Heart left ventricle (tissue), 16 donors: ENCODE measurements at regions of chr10 and their contacts with region 1.

Region 1: DNA sequence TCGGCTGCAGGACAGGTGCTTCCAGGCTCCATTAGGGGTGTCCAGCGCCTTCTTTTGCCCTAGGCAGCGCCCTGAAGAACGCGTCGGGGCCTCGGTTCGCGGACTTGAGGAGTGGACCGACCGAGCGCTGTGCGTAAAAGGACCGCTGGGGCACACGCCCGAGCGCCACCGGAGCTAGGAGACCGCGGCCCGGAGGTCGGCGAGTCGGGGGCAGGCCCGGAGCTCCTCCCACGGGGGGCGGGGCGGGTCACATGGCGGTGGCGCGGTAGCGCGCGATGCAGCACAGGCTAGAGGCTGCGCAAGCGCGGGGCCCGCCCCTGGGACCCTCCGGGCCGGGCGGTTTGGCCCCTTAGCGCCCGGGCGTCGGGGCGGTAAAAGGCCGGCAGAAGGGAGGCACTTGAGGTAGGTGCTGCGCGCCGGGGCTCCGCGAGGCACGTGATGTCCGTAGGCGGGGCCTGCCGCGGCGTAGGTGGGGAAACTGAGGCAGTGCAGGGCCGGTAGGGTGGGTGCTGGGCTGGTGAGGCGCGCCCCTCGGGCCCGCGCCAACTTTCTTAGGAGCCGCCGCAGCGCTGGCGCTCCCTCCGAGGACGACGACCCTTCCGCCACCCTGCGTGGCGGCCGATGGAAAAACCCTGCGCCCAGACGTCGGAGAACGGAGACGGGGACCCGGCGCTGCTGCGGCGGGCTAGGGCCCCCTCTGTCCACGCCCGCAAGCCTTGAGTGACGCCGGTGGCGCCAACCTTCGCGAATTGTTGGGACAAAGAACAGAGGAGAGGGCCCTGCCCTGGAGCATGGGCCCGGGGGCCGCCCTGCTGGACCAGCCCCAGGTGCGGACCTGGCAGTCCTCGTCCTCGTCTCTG is at the start of gene PRXL2A:
- DNase-seq: peak; percentile 89 to 95 (median 91)
- ATAC-seq: peak; percentile 86 to 96 (median 94)
- H3K4me3 ChIP-seq: peak within 1 kb of the TSS; percentile 57 to 94 (median 85)
- H3K27ac ChIP-seq: peak within 1 kb of the TSS; percentile 62 to 95 (median 86)
- H3K4me1 ChIP-seq: peaks cover 3 to 60% (median 50%) of the 10 kb centered on the region in 12 donors
- H3K27me3 ChIP-seq: peaks cover 0 to 6% (median 0%) of the 10 kb centered on the region in 9 donors
- CTCF ChIP-seq: peak in 1 of 12 donors; percentile 9
- POLR2A ChIP-seq: peak in 1 of 2 donors; percentile 70
- total RNA-seq, gene PRXL2A: 63.9 to 123 (median 78.6) TPM

Region 2: DNA sequence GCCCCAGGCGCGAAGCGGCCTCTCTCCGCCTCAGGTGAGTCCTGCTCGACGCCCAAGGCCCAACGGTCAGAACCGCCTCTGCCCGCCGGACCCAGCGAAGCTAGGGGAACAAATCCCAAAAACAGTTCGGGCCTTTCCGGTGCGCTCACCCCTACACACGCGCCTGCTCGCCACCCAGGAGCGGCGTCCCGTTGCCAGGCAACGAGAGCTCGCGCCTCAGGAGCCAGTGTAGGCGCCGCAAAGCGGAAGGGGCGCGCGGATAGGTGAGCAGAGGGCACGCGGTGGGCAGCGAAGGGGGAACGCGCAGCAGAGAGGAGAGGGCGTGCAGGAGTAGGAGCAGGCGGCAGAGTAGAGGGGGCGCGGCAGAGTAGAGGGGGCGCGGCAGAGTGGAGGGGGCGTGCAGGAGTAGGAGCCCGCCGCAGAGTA is 51.9 kb before region 1 on chr10 and contains the starts of genes DYDC1 and DYDC2:
- intact Hi-C with region 1: no loop called
- DNase-seq: peak; percentile 20 to 66 (median 52)
- ATAC-seq: peak in 3 of 4 donors; percentile 62 to 83 (median 69)
- H3K4me3 ChIP-seq: peak within 1 kb of the TSS; percentile 11 to 49 (median 42)
- H3K27ac ChIP-seq: no peak within 1 kb of the TSS
- H3K4me1 ChIP-seq: peaks cover 0 to 13% (median 5%) of the 10 kb centered on the region in 12 donors
- H3K27me3 ChIP-seq: peaks cover 3 to 34% (median 14%) of the 10 kb centered on the region in 9 donors
- CTCF ChIP-seq: no peak
- POLR2A ChIP-seq: no peak
- total RNA-seq, gene DYDC1: not detected
- total RNA-seq, gene DYDC2: not detected

Region 3: GRCh38 chr10:80453701-80454513 is 45.4 kb after region 1 on chr10 and contains the start of gene TSPAN14:
- intact Hi-C with region 1: loop called in 1 of 10 experiments (anchors 5 kb)
- DNase-seq: peak; percentile 88 to 93 (median 91)
- ATAC-seq: peak; percentile 82 to 92 (median 90)
- H3K4me3 ChIP-seq: peak within 1 kb of the TSS; percentile 64 to 100 (median 95)
- H3K27ac ChIP-seq: peak within 1 kb of the TSS; percentile 93 to 100 (median 99)
- H3K4me1 ChIP-seq: peaks cover 3 to 77% (median 36%) of the 10 kb centered on the region in 12 donors
- H3K27me3 ChIP-seq: no peaks in the 10 kb centered on the region
- CTCF ChIP-seq: peak in 1 of 12 donors; percentile 7
- POLR2A ChIP-seq: peak in 1 of 2 donors; percentile 67
- total RNA-seq, gene TSPAN14: 24.6 to 71.5 (median 39.6) TPM

Region 4: DNA sequence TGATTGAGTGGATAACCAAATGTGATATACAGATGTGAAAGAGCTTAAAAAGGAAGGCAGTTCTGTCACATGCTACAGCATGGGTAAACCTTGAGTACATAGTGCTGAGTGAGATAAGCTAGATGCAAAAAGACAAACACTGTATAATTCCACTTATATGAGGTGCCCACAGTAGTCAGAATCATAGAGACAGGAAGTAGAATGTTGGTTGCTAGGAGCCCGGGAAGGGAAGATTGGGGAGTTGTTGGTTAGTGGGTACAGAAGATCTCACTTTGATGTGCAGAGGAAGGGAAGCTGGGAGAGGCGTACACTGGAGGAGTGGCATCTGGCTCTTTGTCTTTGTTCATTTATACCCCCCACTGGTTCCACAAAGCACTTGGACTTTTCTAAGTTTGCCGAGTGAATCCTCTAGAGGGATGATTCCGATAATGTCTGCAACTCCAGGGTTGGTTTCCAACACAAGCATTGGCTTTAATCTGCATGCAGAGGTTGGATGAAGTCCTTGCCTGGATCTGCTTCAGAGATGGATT is 85.1 kb after region 1 on chr10:
- intact Hi-C with region 1: no loop called
- DNase-seq: no peak
- ATAC-seq: peak in 2 of 4 donors; percentile 5 to 45
- H3K4me3 ChIP-seq: no peak overlapping the region
- H3K27ac ChIP-seq: peak overlapping the region in 8 of 12 donors; percentile 11 to 95 (median 24)
- H3K4me1 ChIP-seq: peaks cover 35 to 99% (median 62%) of the 10 kb centered on the region in 12 donors
- H3K27me3 ChIP-seq: no peaks in the 10 kb centered on the region
- CTCF ChIP-seq: no peak
- POLR2A ChIP-seq: no peak